Heart left ventricle (tissue), 16 donors: ENCODE measurements at regions of chr18 and their contacts with region 1.

Region 1: GRCh38 chr18:50009773-50010335 is 185.1 kb downstream of the MYO5B start:
- DNase-seq: peak in 2 of 5 donors; percentile 20 to 37
- ATAC-seq: peak in 3 of 4 donors; percentile 68 to 86 (median 71)
- H3K4me3 ChIP-seq: no peak overlapping the region
- H3K27ac ChIP-seq: no peak overlapping the region
- H3K4me1 ChIP-seq: no peaks in the 10 kb centered on the region
- H3K27me3 ChIP-seq: peaks cover 0 to 5% (median 0%) of the 10 kb centered on the region in 9 donors
- CTCF ChIP-seq: peak; percentile 29 to 56 (median 45)
- POLR2A ChIP-seq: no peak

Region 2: DNA sequence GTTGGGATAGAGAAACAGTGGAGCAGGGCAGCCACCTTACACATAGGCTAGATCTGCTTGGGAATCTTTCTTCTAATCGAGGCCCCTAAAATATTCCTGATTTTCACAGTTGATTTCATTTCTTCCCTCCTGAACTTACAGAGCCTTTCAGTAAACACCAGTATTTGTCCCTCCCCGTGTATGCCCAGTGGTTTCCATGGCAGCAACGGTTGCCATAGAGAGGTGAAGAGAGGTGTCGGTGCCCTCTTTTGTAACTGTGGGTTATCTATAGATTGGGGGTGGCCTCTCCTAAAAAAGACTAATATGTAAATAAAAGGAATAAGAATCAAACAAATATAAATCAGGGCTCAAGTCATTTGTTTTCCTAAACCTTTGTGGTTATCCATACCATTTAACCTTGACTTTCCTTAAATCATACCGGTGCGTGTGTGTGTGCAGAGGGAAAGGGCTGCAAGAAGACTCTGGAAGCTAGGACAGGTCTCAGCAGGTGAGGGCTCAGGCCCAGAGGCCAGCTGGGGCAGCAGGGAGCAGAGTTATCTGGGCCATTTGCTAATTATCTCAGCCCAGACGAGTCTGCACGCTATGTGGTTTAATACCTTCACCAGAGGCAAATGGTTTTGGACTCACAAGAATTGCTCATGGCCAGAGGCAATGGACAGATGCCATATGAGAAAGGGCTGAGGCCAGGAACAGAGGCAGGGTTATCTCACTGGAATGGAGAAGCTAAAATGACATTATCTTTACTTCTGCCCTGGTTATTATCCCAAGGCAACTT is 412.5 kb before region 1 on chr18:
- intact Hi-C with region 1: no loop called
- DNase-seq: no peak
- ATAC-seq: no peak
- H3K4me3 ChIP-seq: no peak overlapping the region
- H3K27ac ChIP-seq: no peak overlapping the region
- H3K4me1 ChIP-seq: no peaks in the 10 kb centered on the region
- H3K27me3 ChIP-seq: peaks cover 0 to 15% (median 0%) of the 10 kb centered on the region in 9 donors
- CTCF ChIP-seq: no peak
- POLR2A ChIP-seq: no peak

Region 3: GRCh38 chr18:49934457-49934856 is 75.4 kb before region 1 on chr18:
- intact Hi-C with region 1: no loop called
- DNase-seq: no peak
- ATAC-seq: no peak
- H3K4me3 ChIP-seq: no peak overlapping the region
- H3K27ac ChIP-seq: no peak overlapping the region
- H3K4me1 ChIP-seq: peaks cover 0 to 12% (median 0%) of the 10 kb centered on the region in 12 donors
- H3K27me3 ChIP-seq: no peaks in the 10 kb centered on the region
- CTCF ChIP-seq: no peak
- POLR2A ChIP-seq: no peak

Region 4: GRCh38 chr18:49944663-49945062 is 65.2 kb before region 1 on chr18:
- intact Hi-C with region 1: loop called in 1 of 10 experiments (anchors 10 kb)
- DNase-seq: no peak
- ATAC-seq: peak in 2 of 4 donors; percentile 44 to 50
- H3K4me3 ChIP-seq: no peak overlapping the region
- H3K27ac ChIP-seq: no peak overlapping the region
- H3K4me1 ChIP-seq: no peaks in the 10 kb centered on the region
- H3K27me3 ChIP-seq: peaks cover 0 to 4% (median 0%) of the 10 kb centered on the region in 9 donors
- CTCF ChIP-seq: peak in 6 of 12 donors; percentile 8 to 44 (median 24)
- POLR2A ChIP-seq: no peak

Region 5: GRCh38 chr18:49970319-49970718 is 39.5 kb before region 1 on chr18:
- intact Hi-C with region 1: no loop called
- DNase-seq: no peak
- ATAC-seq: no peak
- H3K4me3 ChIP-seq: no peak overlapping the region
- H3K27ac ChIP-seq: no peak overlapping the region
- H3K4me1 ChIP-seq: peaks cover 0 to 5% (median 0%) of the 10 kb centered on the region in 12 donors
- H3K27me3 ChIP-seq: no peaks in the 10 kb centered on the region
- CTCF ChIP-seq: no peak
- POLR2A ChIP-seq: no peak

Region 6: DNA sequence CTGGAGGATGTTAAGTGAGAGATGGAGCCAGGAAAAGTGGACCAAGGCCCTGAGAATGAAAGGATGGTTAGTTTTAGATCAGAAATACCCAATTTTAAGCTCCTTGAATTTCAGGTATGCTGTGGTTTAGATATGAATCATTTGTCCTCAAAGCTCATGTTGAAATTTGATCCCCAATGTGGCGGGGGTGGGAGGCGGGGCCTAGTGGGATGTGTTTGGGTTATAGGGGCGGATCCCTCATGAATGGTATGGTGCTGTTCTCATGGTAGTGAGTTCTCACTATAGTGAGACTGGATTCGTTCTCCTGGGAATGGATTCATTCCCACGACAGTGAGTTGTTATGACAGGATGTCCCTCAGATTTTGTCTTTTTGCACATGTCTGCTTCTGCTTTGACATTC is 173.7 kb after region 1 on chr18:
- intact Hi-C with region 1: loop called in 1 of 10 experiments (anchors 10 kb)
- DNase-seq: no peak
- ATAC-seq: no peak
- H3K4me3 ChIP-seq: no peak overlapping the region
- H3K27ac ChIP-seq: no peak overlapping the region
- H3K4me1 ChIP-seq: no peaks in the 10 kb centered on the region
- H3K27me3 ChIP-seq: peaks cover 0 to 25% (median 0%) of the 10 kb centered on the region in 9 donors
- CTCF ChIP-seq: no peak
- POLR2A ChIP-seq: no peak

Region 7: GRCh38 chr18:50194631-50195532 is 185.0 kb after region 1 on chr18 and contains the start of gene MYO5B:
- intact Hi-C with region 1: loop called in 5 of 10 experiments (anchors 5 to 10 kb)
- DNase-seq: peak in 3 of 5 donors; percentile 20 to 67 (median 42)
- ATAC-seq: peak in 3 of 4 donors; percentile 58 to 87 (median 81)
- H3K4me3 ChIP-seq: peak within 1 kb of the TSS; percentile 24 to 70 (median 56)
- H3K27ac ChIP-seq: no peak within 1 kb of the TSS
- H3K4me1 ChIP-seq: peaks cover 0 to 24% (median 4%) of the 10 kb centered on the region in 12 donors
- H3K27me3 ChIP-seq: peaks cover 4 to 85% (median 45%) of the 10 kb centered on the region in 9 donors
- CTCF ChIP-seq: peak in 11 of 12 donors; percentile 8 to 61 (median 37)
- POLR2A ChIP-seq: no peak
- total RNA-seq, gene MYO5B: 0.51 to 5.9 (median 1.6) TPM

Region 8: GRCh38 chr18:50203801-50204604 is 194.1 kb after region 1 on chr18:
- intact Hi-C with region 1: loop called in 5 of 10 experiments (anchors 5 to 10 kb)
- DNase-seq: peak in 1 of 5 donors; percentile 62
- ATAC-seq: peak in 3 of 4 donors; percentile 37 to 71 (median 41)
- H3K4me3 ChIP-seq: peak overlapping the region in 2 of 12 donors; percentile 13 to 19
- H3K27ac ChIP-seq: no peak overlapping the region
- H3K4me1 ChIP-seq: peaks cover 0 to 6% (median 0%) of the 10 kb centered on the region in 12 donors
- H3K27me3 ChIP-seq: peaks cover 0 to 25% (median 3%) of the 10 kb centered on the region in 9 donors
- CTCF ChIP-seq: peak; percentile 30 to 64 (median 52)
- POLR2A ChIP-seq: no peak

Region 9: DNA sequence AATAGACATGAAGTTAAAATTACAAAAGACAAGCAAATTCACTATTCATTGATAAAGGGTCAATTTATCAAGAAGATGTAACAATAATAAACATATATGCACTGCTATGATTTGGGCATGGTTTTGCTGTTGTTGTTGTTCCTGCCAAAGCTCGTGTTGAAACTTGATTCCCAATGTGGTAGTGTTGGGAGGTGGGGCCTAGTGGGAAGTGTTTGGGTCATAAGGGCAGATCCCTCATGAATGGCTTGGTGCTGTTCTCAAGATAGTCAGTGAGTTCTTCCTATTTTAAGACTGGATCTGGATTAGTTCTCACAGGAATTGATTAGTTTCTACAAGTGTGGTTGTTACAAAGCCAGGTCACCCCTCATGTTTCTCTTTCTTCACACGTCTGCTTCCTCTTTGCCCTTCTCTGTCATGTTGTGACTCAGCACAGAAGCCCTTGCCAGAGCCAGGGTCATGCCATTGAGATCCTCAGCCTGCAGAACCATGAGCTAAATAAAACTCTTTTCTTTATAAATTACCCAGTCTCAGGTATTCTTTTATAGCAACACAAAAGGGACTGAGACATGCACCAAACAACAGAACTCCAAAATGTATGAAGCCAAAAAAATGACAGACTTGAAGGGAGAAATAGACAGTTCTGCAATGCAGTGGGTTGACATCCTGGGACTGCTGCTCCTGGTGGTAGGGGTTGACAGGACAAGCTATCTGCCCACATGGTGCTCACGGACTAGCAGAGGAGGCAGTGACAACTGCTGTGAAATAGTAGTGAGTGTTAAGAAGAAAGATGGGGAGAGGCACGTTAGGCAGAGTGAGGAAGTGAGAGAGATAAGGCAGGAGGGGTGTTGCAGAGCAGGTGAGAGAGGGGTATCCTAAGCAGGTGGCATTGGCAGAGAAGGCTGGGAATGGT is 346.4 kb after region 1 on chr18:
- intact Hi-C with region 1: loop called in 2 of 10 experiments (anchors 5 to 10 kb)
- DNase-seq: no peak
- ATAC-seq: peak in 3 of 4 donors; percentile 20 to 61 (median 49)
- H3K4me3 ChIP-seq: no peak overlapping the region
- H3K27ac ChIP-seq: peak overlapping the region in 1 of 12 donors; percentile 18
- H3K4me1 ChIP-seq: peaks cover 0 to 8% (median 0%) of the 10 kb centered on the region in 12 donors
- H3K27me3 ChIP-seq: peaks cover 0 to 13% (median 0%) of the 10 kb centered on the region in 9 donors
- CTCF ChIP-seq: peak in 1 of 12 donors; percentile 11
- POLR2A ChIP-seq: no peak

Region 10: DNA sequence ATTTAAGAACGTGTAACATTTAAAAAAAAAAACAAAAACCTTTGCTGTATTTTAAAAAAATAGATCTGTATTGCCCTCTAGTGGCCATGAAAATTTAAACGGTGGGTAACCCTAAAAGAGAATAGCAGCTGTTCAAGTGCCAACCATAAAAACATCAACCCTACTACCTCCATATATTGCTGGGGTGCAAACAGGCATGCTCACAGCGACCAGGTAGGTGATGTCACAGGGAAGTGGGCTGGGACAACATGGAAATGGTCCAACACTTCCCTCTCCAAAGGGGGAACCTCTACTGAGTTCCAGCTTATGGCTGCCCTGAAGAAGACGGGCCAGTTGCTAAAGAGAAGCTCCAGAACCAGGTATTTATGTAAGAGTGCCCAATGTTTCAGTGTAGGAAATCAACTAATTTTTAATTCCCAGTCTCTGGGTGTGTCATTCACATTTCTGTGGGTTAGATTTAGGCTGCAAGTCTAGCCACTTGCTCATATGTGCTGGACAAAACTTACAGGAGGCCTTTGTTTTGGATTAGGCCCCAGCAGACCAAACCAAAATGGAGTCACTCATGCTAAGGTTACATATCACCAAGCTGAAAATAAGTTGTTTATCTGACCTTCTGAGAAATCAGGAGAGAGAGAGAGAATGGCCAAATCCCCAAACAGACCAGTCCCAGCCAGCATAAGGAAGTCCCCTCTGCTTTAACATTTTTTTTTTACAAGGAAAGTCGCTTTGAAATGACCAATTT is 419.5 kb after region 1 on chr18:
- intact Hi-C with region 1: loop called in 1 of 10 experiments (anchors 5 kb)
- DNase-seq: no peak
- ATAC-seq: no peak
- H3K4me3 ChIP-seq: no peak overlapping the region
- H3K27ac ChIP-seq: no peak overlapping the region
- H3K4me1 ChIP-seq: peaks cover 0 to 2% (median 0%) of the 10 kb centered on the region in 12 donors
- H3K27me3 ChIP-seq: no peaks in the 10 kb centered on the region
- CTCF ChIP-seq: peak in 11 of 12 donors; percentile 32 to 62 (median 55)
- POLR2A ChIP-seq: no peak